Activated CD4-positive, alpha-beta T cell treated with anti-CD3 and anti-CD28 coated beads for 36 hours (primary cell): ENCODE measurements at regions of chr6 and their contacts with region 1.

Region 1: GRCh38 chr6:134882426-134883038 is 67.4 kb downstream of the ALDH8A1 start:
- DNase-seq: peak; percentile 73
- ATAC-seq: no peak
- H3K4me3 Mint-ChIP-seq: no peak overlapping the region
- H3K27ac Mint-ChIP-seq: no peak overlapping the region
- H3K4me1 Mint-ChIP-seq: no peaks in the 10 kb centered on the region
- H3K27me3 Mint-ChIP-seq: peaks cover 6% of the 10 kb centered on the region

Region 2: GRCh38 chr6:134161036-134161435 is 721.5 kb before region 1 on chr6:
- CTCF ChIA-PET with region 1: interaction called, 7 read pairs
- POLR2A ChIA-PET with region 1: no interaction called
- intact Hi-C with region 1: loop called (anchors 1 kb)
- DNase-seq: no peak
- ATAC-seq: no peak
- H3K4me3 Mint-ChIP-seq: no peak overlapping the region
- H3K27ac Mint-ChIP-seq: no peak overlapping the region
- H3K4me1 Mint-ChIP-seq: no peaks in the 10 kb centered on the region
- H3K27me3 Mint-ChIP-seq: no peaks in the 10 kb centered on the region

Region 3: DNA sequence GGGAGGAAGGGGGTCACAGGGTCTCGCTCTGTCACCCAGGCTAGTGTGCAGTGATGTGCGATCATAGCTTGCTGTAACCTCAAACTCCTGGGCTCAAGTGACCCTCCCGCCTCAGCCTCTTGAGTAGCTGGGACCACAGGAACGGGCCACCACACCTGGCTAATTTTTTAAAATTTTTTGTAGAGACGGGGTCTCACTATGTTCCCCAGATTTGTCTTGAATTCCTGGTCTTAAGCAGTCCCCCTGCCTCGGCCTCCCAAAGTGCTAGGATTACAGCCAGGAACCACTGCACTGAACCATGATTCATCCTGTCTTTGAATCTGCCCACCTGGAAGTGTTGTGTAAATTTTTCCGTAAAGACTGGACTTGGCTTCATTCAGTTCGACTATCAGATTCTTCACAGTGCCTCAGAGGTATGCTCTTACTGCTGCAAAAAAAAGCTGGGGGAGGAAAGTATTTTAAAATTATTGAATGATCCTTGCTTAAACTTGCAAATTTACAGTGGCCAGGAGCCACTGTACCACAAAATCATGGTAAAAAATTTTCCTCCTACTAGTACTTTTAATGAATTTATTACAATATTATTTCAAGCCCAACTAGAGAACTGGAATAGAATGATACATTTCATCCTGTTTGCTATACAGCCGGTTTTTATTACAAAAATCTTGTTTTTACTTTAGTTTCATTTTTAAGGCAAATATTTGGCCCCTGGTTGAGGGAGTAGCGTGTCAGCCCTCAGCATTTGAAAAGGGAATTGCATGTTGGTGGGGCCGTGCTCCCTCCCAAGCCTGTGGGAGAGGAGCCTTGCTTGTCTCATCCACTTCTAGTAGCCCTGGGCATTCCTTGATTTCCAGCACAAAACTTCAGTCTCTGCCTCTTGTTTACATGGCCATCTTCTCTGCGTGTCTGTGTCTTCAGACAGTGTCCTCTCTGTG is 362.1 kb before region 1 on chr6:
- CTCF ChIA-PET with region 1: no interaction called
- POLR2A ChIA-PET with region 1: no interaction called
- intact Hi-C with region 1: no loop called
- DNase-seq: no peak
- ATAC-seq: no peak
- H3K4me3 Mint-ChIP-seq: no peak overlapping the region
- H3K27ac Mint-ChIP-seq: peak overlapping the region; percentile 83
- H3K4me1 Mint-ChIP-seq: peaks cover 33% of the 10 kb centered on the region
- H3K27me3 Mint-ChIP-seq: no peaks in the 10 kb centered on the region

Region 4: GRCh38 chr6:134809132-134809531 is 73.4 kb before region 1 on chr6:
- CTCF ChIA-PET with region 1: no interaction called
- POLR2A ChIA-PET with region 1: no interaction called
- intact Hi-C with region 1: no loop called
- DNase-seq: no peak
- ATAC-seq: no peak
- H3K4me3 Mint-ChIP-seq: no peak overlapping the region
- H3K27ac Mint-ChIP-seq: no peak overlapping the region
- H3K4me1 Mint-ChIP-seq: no peaks in the 10 kb centered on the region
- H3K27me3 Mint-ChIP-seq: peaks cover 4% of the 10 kb centered on the region

Region 5: GRCh38 chr6:134822920-134823709 is 59.4 kb before region 1 on chr6:
- CTCF ChIA-PET with region 1: interaction called, 7 read pairs
- POLR2A ChIA-PET with region 1: no interaction called
- intact Hi-C with region 1: loop called (anchors 1 to 2 kb)
- DNase-seq: peak; percentile 36
- ATAC-seq: peak; percentile 86
- H3K4me3 Mint-ChIP-seq: no peak overlapping the region
- H3K27ac Mint-ChIP-seq: no peak overlapping the region
- H3K4me1 Mint-ChIP-seq: peaks cover 4% of the 10 kb centered on the region
- H3K27me3 Mint-ChIP-seq: peaks cover 2% of the 10 kb centered on the region

Region 6: GRCh38 chr6:134870677-134871498 is 11.6 kb before region 1 on chr6:
- CTCF ChIA-PET with region 1: interaction called, 12 read pairs
- POLR2A ChIA-PET with region 1: no interaction called
- intact Hi-C with region 1: no loop called
- DNase-seq: no peak
- ATAC-seq: no peak
- H3K4me3 Mint-ChIP-seq: no peak overlapping the region
- H3K27ac Mint-ChIP-seq: no peak overlapping the region
- H3K4me1 Mint-ChIP-seq: peaks cover 18% of the 10 kb centered on the region
- H3K27me3 Mint-ChIP-seq: no peaks in the 10 kb centered on the region